ENCODE measurements at regions of chr5 and their contacts with region 1.

Region 1: DNA sequence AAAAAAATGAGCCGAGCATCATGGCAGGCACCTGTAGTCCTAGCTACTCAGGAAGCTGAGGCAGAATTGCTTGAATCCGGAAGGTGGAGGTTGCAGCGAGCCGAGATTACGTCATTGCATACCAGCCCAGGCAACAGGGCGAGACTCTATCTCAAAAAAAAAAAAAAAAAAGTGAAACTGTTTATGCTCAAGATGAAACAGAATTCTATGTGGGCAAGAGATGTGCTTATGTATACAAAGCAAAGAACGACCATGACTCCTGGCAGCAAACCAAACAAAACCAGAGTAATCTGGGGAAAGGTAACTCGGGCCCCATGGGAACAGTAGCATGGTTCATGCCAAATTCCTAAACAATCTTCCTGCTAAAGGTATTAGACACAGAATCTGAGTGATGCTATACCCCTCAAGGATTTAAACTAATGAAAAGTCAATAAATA is 32.6 kb upstream of the PLAC8L1 start:
- DNase-seq: no peak
- H3K4me3 ChIP-seq: no peak overlapping the region
- H3K27ac ChIP-seq: no peak overlapping the region
- H3K4me1 ChIP-seq: no peaks in the 10 kb centered on the region
- H3K27me3 ChIP-seq: no peaks in the 10 kb centered on the region
- CTCF ChIP-seq: no peak
- POLR2A ChIP-seq: no peak

Region 2: GRCh38 chr5:146273109-146273508 is 135.1 kb after region 1 on chr5:
- intact Hi-C with region 1: loop called in 1 of 2 experiments (anchors 10 kb)
- DNase-seq: no peak
- H3K4me3 ChIP-seq: no peak overlapping the region
- H3K27ac ChIP-seq: no peak overlapping the region
- H3K4me1 ChIP-seq: no peaks in the 10 kb centered on the region
- H3K27me3 ChIP-seq: no peaks in the 10 kb centered on the region
- CTCF ChIP-seq: no peak
- POLR2A ChIP-seq: no peak

Measured in adrenal gland (tissue), 19 donors.